Panc1 (cell line): ENCODE measurements at regions of chr1 and their contacts with region 1.

Region 1: DNA sequence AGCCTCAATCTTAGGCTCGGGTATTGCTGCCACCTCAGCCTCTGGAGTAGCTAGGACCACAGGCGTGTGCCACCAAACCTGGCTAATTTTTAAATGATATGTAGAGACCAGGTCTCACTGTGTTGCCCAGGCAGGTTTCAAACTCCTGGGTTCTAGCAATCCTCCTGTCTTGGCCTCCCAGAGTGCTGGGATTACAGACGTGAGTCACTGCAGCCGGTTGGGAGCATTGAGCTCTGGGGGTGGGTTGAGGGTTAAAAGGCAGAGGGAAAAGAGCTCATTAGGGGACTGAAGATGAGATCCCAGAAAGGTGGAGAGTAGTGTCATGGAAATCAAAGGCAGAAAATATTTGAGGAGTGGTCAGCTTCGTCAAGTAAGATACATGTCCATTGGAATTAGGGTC is 7.1 kb downstream of the RAD54L start:
- DNase-seq: no peak
- ATAC-seq: no peak
- H3K4me3 ChIP-seq: no peak overlapping the region
- H3K27ac ChIP-seq: no peak overlapping the region
- H3K4me1 ChIP-seq: peaks cover 7% of the 10 kb centered on the region; the same call in 1 of the 2 replicates
- H3K27me3 ChIP-seq: no peaks in the 10 kb centered on the region
- CTCF ChIP-seq: no peak

Region 2: DNA sequence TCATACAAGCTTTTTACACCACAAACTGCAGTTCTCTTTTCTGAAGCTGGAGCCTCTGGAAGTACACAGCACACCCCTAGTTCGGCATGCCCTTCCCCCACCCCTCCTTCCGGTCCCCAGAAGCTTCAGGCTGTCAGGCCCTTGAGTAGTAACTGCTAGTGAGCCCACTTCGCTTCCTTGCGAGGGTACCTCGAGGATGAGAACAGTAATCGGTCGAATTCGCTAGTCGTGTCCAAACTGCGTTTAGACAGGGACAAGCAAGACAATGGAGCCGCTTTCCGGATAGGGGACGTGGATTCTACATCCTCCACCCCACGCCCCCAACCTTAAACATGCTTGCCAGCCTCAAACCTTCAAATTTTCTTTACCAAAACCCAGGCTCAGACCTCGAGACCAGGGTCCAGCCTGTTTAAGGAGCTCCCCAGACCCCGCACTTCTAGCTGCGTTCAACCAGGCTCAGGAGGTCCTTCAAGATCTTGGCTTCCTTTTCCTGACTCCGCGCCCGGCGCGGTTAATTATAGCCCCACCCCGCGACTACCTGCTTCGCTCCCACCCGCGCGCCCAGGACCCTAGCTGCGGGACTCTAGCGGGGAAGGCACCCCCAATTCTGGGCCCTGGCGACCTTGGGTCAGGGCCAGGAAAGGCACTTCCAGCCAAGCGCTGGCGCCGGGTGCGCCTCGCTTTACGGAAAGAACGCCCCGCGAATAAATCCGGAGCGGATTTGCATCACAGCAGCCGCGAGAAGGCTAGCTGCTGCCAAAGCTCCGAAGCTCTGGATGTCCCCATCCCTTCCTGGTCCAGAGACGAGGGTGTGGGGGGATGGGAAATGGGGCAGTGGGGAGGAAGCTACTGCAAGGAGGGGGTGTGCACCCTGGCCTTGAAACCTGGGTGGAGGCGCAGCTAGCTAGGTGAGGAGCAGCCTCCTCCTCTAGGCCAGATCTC is 87.9 kb before region 1 on chr1:
- CTCF ChIA-PET with region 1: no interaction called
- POLR2A ChIA-PET with region 1: interaction called, 10 read pairs
- in situ Hi-C with region 1: no loop called
- intact Hi-C with region 1: no loop called
- DNase-seq: no peak
- ATAC-seq: no peak
- H3K4me3 ChIP-seq: no peak overlapping the region
- H3K27ac ChIP-seq: no peak overlapping the region
- H3K4me1 ChIP-seq: no peaks in the 10 kb centered on the region; the same call in 1 of the 2 replicates
- H3K27me3 ChIP-seq: no peaks in the 10 kb centered on the region
- CTCF ChIP-seq: no peak